ENCODE measurements at regions of chr1 and their contacts with region 1.

Region 1: DNA sequence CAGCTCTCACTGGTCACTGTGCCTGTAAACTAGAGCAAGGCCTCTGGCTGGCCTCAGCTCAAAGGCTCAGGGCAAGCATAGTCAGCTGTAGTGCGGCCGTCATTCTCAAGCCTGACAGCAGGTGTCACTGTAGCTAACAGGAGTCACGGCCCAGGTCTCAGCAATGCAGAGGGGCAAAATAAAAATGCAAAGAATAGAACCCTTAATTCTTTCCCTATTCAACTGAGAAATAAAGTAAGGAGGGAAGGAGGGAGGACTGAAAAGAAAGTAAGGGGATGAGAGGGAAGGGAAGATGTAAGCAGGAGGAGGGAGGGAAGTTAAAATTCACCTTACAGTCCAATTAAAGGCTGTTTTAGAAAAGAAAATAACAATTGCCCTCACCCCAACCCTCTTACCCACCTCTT is 106.1 kb downstream of the KIAA0319L start:
- DNase-seq: peak; percentile 66 to 75 (median 73)
- H3K4me3 ChIP-seq: no peak overlapping the region
- H3K4me3 Mint-ChIP-seq: peak overlapping the region in 5 of 8 donors; percentile 22 to 87 (median 42)
- H3K27ac ChIP-seq: no peak overlapping the region
- H3K27ac Mint-ChIP-seq: peak overlapping the region; percentile 50 to 95 (median 90)
- H3K4me1 ChIP-seq: peaks cover 26% of the 10 kb centered on the region
- H3K4me1 Mint-ChIP-seq: peaks cover 28 to 39% (median 32%) of the 10 kb centered on the region in 4 donors
- H3K27me3 ChIP-seq: no peaks in the 10 kb centered on the region
- H3K27me3 Mint-ChIP-seq: no peaks in the 10 kb centered on the region

Region 2: GRCh38 chr1:35488336-35488735 is 37.2 kb after region 1 on chr1:
- CTCF ChIA-PET with region 1: interaction called, 16 read pairs
- POLR2A ChIA-PET with region 1: no interaction called
- intact Hi-C with region 1: no loop called
- DNase-seq: no peak
- H3K4me3 ChIP-seq: no peak overlapping the region
- H3K4me3 Mint-ChIP-seq: peak overlapping the region in 4 of 8 donors; percentile 18 to 59 (median 20)
- H3K27ac ChIP-seq: no peak overlapping the region
- H3K27ac Mint-ChIP-seq: peak overlapping the region in 4 of 7 donors; percentile 17 to 83 (median 44)
- H3K4me1 ChIP-seq: peaks cover 13% of the 10 kb centered on the region
- H3K4me1 Mint-ChIP-seq: peaks cover 12 to 22% (median 19%) of the 10 kb centered on the region in 4 donors
- H3K27me3 ChIP-seq: no peaks in the 10 kb centered on the region
- H3K27me3 Mint-ChIP-seq: no peaks in the 10 kb centered on the region

Region 3: GRCh38 chr1:35519432-35519831 is 68.3 kb after region 1 on chr1:
- CTCF ChIA-PET with region 1: interaction called, 17 read pairs
- POLR2A ChIA-PET with region 1: no interaction called
- intact Hi-C with region 1: no loop called
- DNase-seq: no peak
- H3K4me3 ChIP-seq: no peak overlapping the region
- H3K4me3 Mint-ChIP-seq: peak overlapping the region in 1 of 8 donors; percentile 26
- H3K27ac ChIP-seq: no peak overlapping the region
- H3K27ac Mint-ChIP-seq: peak overlapping the region; percentile 12 to 86 (median 74)
- H3K4me1 ChIP-seq: peaks cover 7% of the 10 kb centered on the region
- H3K4me1 Mint-ChIP-seq: peaks cover 24 to 52% (median 45%) of the 10 kb centered on the region in 4 donors
- H3K27me3 ChIP-seq: no peaks in the 10 kb centered on the region
- H3K27me3 Mint-ChIP-seq: no peaks in the 10 kb centered on the region

Region 4: GRCh38 chr1:35557292-35558063 is 106.4 kb after region 1 on chr1 and contains the starts of genes KIAA0319L and NCDN:
- CTCF ChIA-PET with region 1: interaction called, 69 read pairs
- POLR2A ChIA-PET with region 1: interaction called, 24 read pairs
- intact Hi-C with region 1: no loop called
- DNase-seq: peak; percentile 93 to 97 (median 95)
- H3K4me3 ChIP-seq: peak within 1 kb of the TSS; percentile 92 to 100
- H3K4me3 Mint-ChIP-seq: peak within 1 kb of the TSS; percentile 94 to 99 (median 97)
- H3K27ac ChIP-seq: peak within 1 kb of the TSS; percentile 70
- H3K27ac Mint-ChIP-seq: peak within 1 kb of the TSS; percentile 95 to 100 (median 96)
- H3K4me1 ChIP-seq: peaks cover 52% of the 10 kb centered on the region
- H3K4me1 Mint-ChIP-seq: peaks cover 37 to 77% (median 48%) of the 10 kb centered on the region in 4 donors
- H3K27me3 ChIP-seq: no peaks in the 10 kb centered on the region
- H3K27me3 Mint-ChIP-seq: no peaks in the 10 kb centered on the region
- total RNA-seq, gene KIAA0319L: 79.4 to 82.9 TPM
- total RNA-seq, gene NCDN: 29.7 to 32.2 TPM

Region 5: DNA sequence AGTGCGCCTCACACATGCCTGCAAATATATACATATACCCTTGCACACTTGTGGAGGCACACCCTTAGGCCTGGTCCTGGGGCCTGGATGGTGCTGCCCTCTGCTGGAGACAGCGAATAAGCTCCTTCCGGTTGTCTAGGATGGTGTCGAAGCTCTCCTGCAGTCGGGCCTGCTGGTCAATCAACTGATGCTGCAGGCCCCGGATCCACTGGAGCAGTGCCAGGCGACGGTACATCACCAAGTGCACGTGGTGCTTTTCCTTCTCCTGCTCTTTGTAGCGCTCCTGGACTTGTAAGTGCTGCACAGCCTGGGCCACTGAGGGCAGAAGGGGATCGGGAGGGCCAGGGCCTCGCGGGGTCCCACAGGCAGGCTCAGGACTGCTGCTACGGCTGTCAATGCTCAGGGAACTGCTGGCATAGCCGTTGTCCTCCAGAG is 264.5 kb after region 1 on chr1:
- CTCF ChIA-PET with region 1: interaction called, 36 read pairs
- POLR2A ChIA-PET with region 1: no interaction called
- intact Hi-C with region 1: loop called (anchors 1 kb)
- DNase-seq: peak; percentile 67 to 75 (median 71)
- H3K4me3 ChIP-seq: no peak overlapping the region
- H3K4me3 Mint-ChIP-seq: peak overlapping the region in 7 of 8 donors; percentile 9 to 88 (median 72)
- H3K27ac ChIP-seq: no peak overlapping the region
- H3K27ac Mint-ChIP-seq: peak overlapping the region; percentile 2 to 88 (median 36)
- H3K4me1 ChIP-seq: peaks cover 33% of the 10 kb centered on the region
- H3K4me1 Mint-ChIP-seq: peaks cover 29 to 43% (median 33%) of the 10 kb centered on the region in 4 donors
- H3K27me3 ChIP-seq: no peaks in the 10 kb centered on the region
- H3K27me3 Mint-ChIP-seq: no peaks in the 10 kb centered on the region